Pancreas (tissue), 10 donors: ENCODE measurements at regions of chr7 and their contacts with region 1.

Region 1: GRCh38 chr7:97027427-97028234 is 3.0 kb upstream of the DLX5 start:
- DNase-seq: peak; percentile 58 to 82 (median 76)
- ATAC-seq: peak; percentile 85 to 96 (median 94)
- H3K4me3 ChIP-seq: peak overlapping the region in 2 of 4 donors; percentile 9 to 44
- H3K27ac ChIP-seq: no peak overlapping the region
- H3K4me1 ChIP-seq: peaks cover 0 to 11% (median 6%) of the 10 kb centered on the region in 3 donors
- H3K27me3 ChIP-seq: peaks cover 0 to 38% (median 10%) of the 10 kb centered on the region in 4 donors
- CTCF ChIP-seq: peak; percentile 56 to 84 (median 72)

Region 2: DNA sequence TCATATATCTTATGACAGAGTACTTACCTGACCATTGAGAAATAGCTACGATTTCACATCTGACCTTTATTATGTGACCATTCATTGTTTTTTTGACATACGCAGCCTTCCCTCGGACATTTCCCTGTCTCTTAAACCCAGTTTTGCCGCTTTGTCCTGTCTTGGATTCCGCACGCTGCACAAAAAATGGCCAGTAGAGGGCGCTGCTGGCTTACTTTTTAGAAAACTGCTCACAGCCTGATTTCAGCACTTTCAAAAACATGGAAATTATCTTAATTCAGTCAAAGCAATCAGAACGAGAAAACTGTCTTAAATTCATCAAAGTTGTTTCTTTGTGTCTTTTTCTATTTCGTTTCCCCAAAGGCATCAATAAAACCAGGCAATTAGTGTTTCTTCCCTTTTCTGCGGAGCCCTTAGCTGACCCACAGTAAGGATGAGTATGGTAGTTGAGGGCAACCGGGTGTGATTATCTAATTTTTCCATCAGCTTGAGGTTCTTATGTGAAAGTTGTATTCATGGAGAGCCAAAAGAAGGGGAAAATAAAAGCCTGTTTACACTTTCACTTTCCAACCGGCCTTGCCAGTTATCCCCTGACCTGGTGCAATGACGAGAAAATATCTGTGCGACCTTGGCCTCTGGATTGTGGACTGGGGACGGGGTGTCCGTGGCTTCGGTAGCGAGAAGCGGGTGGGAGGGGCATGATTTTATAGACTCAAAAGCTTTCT is 1110.9 kb before region 1 on chr7:
- intact Hi-C with region 1: loop called in 1 of 3 experiments (anchors 10 kb)
- DNase-seq: peak; percentile 43 to 94 (median 82)
- ATAC-seq: peak; percentile 86 to 92 (median 91)
- H3K4me3 ChIP-seq: no peak overlapping the region
- H3K27ac ChIP-seq: no peak overlapping the region
- H3K4me1 ChIP-seq: no peaks in the 10 kb centered on the region
- H3K27me3 ChIP-seq: peaks cover 0 to 18% (median 0%) of the 10 kb centered on the region in 4 donors
- CTCF ChIP-seq: peak; percentile 85 to 94 (median 88)

Region 3: GRCh38 chr7:96075510-96076349 is 951.9 kb before region 1 on chr7:
- intact Hi-C with region 1: loop called in 2 of 3 experiments (anchors 5 to 10 kb)
- DNase-seq: peak; percentile 16 to 76 (median 52)
- ATAC-seq: peak; percentile 92 to 98 (median 98)
- H3K4me3 ChIP-seq: peak overlapping the region; percentile 9 to 48 (median 26)
- H3K27ac ChIP-seq: no peak overlapping the region
- H3K4me1 ChIP-seq: no peaks in the 10 kb centered on the region
- H3K27me3 ChIP-seq: peaks cover 0 to 21% (median 2%) of the 10 kb centered on the region in 4 donors
- CTCF ChIP-seq: peak; percentile 21 to 74 (median 58)

Region 4: GRCh38 chr7:96414931-96415292 is 612.7 kb before region 1 on chr7:
- intact Hi-C with region 1: loop called in 1 of 3 experiments (anchors 10 kb)
- DNase-seq: peak in 3 of 6 donors; percentile 4 to 32 (median 17)
- ATAC-seq: peak in 3 of 4 donors; percentile 78 to 85 (median 83)
- H3K4me3 ChIP-seq: no peak overlapping the region
- H3K27ac ChIP-seq: no peak overlapping the region
- H3K4me1 ChIP-seq: no peaks in the 10 kb centered on the region
- H3K27me3 ChIP-seq: no peaks in the 10 kb centered on the region
- CTCF ChIP-seq: peak; percentile 18 to 42 (median 26)

Region 5: DNA sequence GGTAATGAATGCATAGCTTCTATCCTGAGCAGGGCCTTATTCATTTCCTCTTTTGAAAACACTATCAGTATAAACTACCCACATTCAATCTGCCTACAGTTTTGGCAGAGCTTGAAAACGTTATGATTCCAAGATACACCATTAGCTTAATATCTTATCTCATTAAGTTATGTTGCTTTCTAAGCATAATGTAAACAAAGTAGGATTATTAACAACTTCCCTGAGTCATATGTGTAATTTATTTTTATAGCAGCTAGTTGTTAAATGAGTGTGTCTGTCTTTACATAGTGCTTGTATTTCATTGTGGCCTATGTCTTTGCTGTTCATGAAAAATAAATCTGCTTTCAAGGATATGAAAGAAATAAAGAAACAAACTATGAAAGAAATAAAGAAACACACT is 128.5 kb before region 1 on chr7:
- intact Hi-C with region 1: no loop called
- DNase-seq: no peak
- ATAC-seq: no peak
- H3K4me3 ChIP-seq: no peak overlapping the region
- H3K27ac ChIP-seq: no peak overlapping the region
- H3K4me1 ChIP-seq: no peaks in the 10 kb centered on the region
- H3K27me3 ChIP-seq: no peaks in the 10 kb centered on the region
- CTCF ChIP-seq: no peak

Region 6: DNA sequence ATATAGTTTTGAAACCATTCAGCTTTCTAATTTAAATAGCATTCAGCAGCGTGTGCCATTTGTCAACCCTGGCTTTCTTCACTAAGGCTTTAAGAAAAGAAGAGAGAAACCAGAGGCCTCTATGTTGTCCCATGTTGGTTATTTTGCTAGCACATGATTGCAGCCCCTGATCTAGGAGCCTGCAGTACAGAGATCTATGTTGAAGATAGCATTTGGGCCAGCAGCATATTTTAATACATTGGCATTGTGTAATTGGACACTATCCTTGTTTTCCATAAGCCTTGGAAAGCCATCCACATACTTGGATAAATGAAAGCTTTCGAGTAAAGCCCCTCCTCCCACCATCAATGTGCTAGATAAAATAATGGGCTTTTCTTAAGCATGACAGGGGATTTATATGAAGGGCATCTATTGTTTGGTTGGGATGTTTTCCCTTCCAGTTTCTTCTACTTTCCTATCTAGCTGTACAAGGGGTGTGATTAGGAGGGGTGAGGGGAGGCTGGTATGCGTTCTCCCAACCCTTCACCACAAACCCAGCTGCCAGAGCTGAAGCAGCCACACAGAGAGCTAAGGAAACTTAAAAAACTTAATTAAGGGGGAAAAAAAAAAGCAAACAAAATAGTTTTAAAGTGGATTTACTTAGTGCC is 66.8 kb after region 1 on chr7:
- intact Hi-C with region 1: no loop called
- DNase-seq: no peak
- ATAC-seq: no peak
- H3K4me3 ChIP-seq: no peak overlapping the region
- H3K27ac ChIP-seq: no peak overlapping the region
- H3K4me1 ChIP-seq: no peaks in the 10 kb centered on the region
- H3K27me3 ChIP-seq: peaks cover 0 to 13% (median 0%) of the 10 kb centered on the region in 4 donors
- CTCF ChIP-seq: no peak